CD8-positive, alpha-beta T cell (primary cell): ENCODE measurements at regions of chr9 and their contacts with region 1.

Region 1: GRCh38 chr9:14353222-14354056 is 39.5 kb upstream of the NFIB start:
- DNase-seq: peak; percentile 36 to 72 (median 61)
- ATAC-seq: no peak
- H3K4me3 ChIP-seq: no peak overlapping the region
- H3K4me3 Mint-ChIP-seq: no peak overlapping the region
- H3K27ac ChIP-seq: no peak overlapping the region
- H3K27ac Mint-ChIP-seq: no peak overlapping the region
- H3K4me1 ChIP-seq: no peaks in the 10 kb centered on the region
- H3K4me1 Mint-ChIP-seq: peaks cover 6% of the 10 kb centered on the region
- H3K27me3 ChIP-seq: peaks cover 0 to 2% of the 10 kb centered on the region in 2 experiments
- H3K27me3 Mint-ChIP-seq: peaks cover 51% of the 10 kb centered on the region
- CTCF ChIP-seq: peak; percentile 18

Region 2: DNA sequence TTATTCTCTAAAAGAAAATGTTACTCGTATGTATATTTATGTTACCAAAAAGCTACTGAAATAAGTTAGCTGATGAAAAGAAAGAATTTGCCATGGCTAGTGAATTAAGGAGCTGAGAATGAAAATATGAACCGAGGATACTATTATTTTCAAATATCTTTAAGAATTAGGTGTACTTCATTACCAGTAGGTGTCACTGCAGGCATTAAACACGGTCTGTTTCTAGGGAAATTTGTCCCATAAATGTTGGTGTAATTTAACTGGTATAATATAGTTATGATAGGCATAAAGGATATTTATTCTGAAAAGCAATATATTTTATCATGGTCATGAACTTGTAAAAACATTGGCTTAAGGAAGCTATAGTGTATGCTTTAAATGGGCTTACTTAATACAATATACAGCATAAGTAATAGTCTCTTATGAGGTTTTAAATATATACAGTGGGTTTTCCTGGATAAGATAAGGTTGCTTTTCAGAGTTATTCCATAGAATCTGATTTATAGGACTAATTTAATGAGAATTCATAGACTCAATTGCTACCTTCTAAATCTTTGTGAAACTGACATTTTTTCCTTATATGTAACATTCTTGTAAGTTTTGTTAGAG is 1001.6 kb before region 1 on chr9:
- CTCF ChIA-PET with region 1: no interaction called
- POLR2A ChIA-PET with region 1: no interaction called
- intact Hi-C with region 1: loop called in 1 of 2 experiments (anchors 10 kb)
- DNase-seq: peak in 1 of 9 experiments; percentile 4
- ATAC-seq: no peak
- H3K4me3 ChIP-seq: no peak overlapping the region
- H3K4me3 Mint-ChIP-seq: no peak overlapping the region
- H3K27ac ChIP-seq: no peak overlapping the region
- H3K27ac Mint-ChIP-seq: no peak overlapping the region
- H3K4me1 ChIP-seq: no peaks in the 10 kb centered on the region
- H3K4me1 Mint-ChIP-seq: no peaks in the 10 kb centered on the region
- H3K27me3 ChIP-seq: no peaks in the 10 kb centered on the region
- H3K27me3 Mint-ChIP-seq: no peaks in the 10 kb centered on the region
- CTCF ChIP-seq: no peak

Region 3: GRCh38 chr9:13427587-13427986 is 925.9 kb before region 1 on chr9:
- CTCF ChIA-PET with region 1: interaction called, 10 read pairs
- POLR2A ChIA-PET with region 1: no interaction called
- intact Hi-C with region 1: loop called (anchors 2 to 5 kb)
- DNase-seq: peak in 2 of 9 experiments; percentile 26 to 27
- ATAC-seq: no peak
- H3K4me3 ChIP-seq: no peak overlapping the region
- H3K4me3 Mint-ChIP-seq: no peak overlapping the region
- H3K27ac ChIP-seq: no peak overlapping the region
- H3K27ac Mint-ChIP-seq: no peak overlapping the region
- H3K4me1 ChIP-seq: no peaks in the 10 kb centered on the region
- H3K4me1 Mint-ChIP-seq: no peaks in the 10 kb centered on the region
- H3K27me3 ChIP-seq: no peaks in the 10 kb centered on the region
- H3K27me3 Mint-ChIP-seq: no peaks in the 10 kb centered on the region
- CTCF ChIP-seq: peak; percentile 53